IMR-90 (cell line): ENCODE measurements at regions of chr1 and their contacts with region 1.

Region 1: DNA sequence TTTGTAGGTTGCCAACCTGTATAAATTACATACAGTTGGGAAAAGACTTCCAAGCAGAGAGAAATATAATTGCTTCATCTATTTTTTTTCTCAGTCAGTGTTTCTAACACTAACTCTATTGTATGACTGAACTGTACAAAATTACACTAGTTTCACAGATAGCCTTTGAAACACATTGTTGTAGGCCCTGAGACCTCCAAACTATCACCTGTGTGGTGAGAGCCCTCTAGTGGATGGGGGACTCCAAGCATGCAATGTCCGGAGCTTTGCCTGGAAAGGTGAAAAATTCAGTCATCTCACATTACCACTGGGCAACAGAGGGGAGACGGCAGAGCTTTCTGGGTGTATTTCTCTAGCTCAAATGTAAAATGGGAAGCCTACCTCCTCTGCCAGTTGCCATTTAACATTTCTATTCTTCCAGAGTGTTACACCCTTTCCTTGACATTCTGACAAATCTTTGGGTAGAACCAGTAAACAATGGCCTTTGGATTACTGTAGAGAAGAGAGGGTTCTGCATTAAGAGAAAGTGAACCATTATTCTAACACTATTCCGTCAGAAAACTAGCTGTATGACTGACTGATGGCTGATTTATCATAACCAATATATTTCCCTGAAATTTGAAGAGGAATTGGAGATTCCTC is 212.2 kb downstream of the LYPLAL1 start:
- DNase-seq: peak; percentile 71
- ATAC-seq: peak; percentile 87
- H3K4me3 ChIP-seq: no peak overlapping the region
- H3K27ac ChIP-seq: no peak overlapping the region
- H3K4me1 ChIP-seq: peaks cover 2% of the 10 kb centered on the region; the same call in 1 of the 2 replicates
- H3K27me3 ChIP-seq: no peaks in the 10 kb centered on the region
- CTCF ChIP-seq: peak; percentile 83
- POLR2A ChIP-seq: no peak
- RAD21 ChIP-seq: peak; percentile 92

Region 2: DNA sequence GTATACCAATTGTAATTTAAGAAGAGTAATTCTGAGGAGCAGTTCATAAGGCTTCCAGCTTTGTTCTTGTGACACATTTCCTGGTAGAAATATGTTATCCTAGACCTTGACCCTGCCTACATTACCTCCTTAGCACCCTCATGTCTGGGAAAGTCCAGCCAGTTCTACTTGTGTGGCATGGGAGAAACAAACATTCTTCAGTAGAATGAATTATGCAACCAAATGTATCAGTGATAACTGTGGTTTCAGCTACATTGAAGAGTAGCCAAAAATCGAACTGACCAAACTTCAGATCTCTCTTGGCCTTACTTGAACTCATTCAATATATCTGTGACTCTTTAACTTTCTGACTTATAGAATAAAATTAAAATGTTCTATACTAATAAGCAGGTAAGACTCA is 520.3 kb before region 1 on chr1:
- CTCF ChIA-PET with region 1: no interaction called
- POLR2A ChIA-PET with region 1: no interaction called
- dilution Hi-C with region 1: no loop called
- in situ Hi-C with region 1: no loop called
- intact Hi-C with region 1: loop called (anchors 10 kb)
- DNase-seq: peak; percentile 47
- ATAC-seq: no peak; the same call in 1 of the 2 replicates
- H3K4me3 ChIP-seq: no peak overlapping the region
- H3K27ac ChIP-seq: no peak overlapping the region
- H3K4me1 ChIP-seq: no peaks in the 10 kb centered on the region; the same call in 1 of the 2 replicates
- H3K27me3 ChIP-seq: no peaks in the 10 kb centered on the region
- CTCF ChIP-seq: no peak
- POLR2A ChIP-seq: no peak
- RAD21 ChIP-seq: no peak

Region 3: GRCh38 chr1:218904416-218904815 is 481.5 kb before region 1 on chr1:
- CTCF ChIA-PET with region 1: no interaction called
- POLR2A ChIA-PET with region 1: no interaction called
- dilution Hi-C with region 1: no loop called
- in situ Hi-C with region 1: no loop called
- intact Hi-C with region 1: no loop called
- DNase-seq: no peak
- ATAC-seq: no peak
- H3K4me3 ChIP-seq: no peak overlapping the region
- H3K27ac ChIP-seq: no peak overlapping the region
- H3K4me1 ChIP-seq: no peaks in the 10 kb centered on the region
- H3K27me3 ChIP-seq: no peaks in the 10 kb centered on the region
- CTCF ChIP-seq: no peak
- POLR2A ChIP-seq: no peak
- RAD21 ChIP-seq: no peak

Region 4: DNA sequence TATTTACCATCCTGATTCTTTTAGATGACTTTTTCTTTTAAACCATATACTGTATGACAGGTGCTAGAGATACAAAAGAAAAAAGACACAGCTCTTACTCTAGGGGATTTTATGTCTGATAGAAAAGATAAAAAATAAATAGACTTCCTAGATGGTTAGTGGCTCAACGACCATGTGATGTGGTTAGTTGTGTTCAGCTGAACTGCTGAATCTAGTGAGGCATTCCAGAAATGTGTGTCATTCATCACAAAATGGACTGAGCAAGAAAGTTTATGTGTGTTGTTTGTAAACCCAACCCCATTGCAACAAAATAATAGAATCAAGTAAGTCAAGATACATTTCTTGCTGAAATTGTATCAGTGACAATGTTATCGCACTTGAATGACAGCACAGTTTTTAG is 418.1 kb before region 1 on chr1:
- CTCF ChIA-PET with region 1: no interaction called
- POLR2A ChIA-PET with region 1: no interaction called
- dilution Hi-C with region 1: no loop called
- in situ Hi-C with region 1: no loop called
- intact Hi-C with region 1: no loop called
- DNase-seq: peak; percentile 39
- ATAC-seq: no peak
- H3K4me3 ChIP-seq: no peak overlapping the region
- H3K27ac ChIP-seq: no peak overlapping the region
- H3K4me1 ChIP-seq: no peaks in the 10 kb centered on the region
- H3K27me3 ChIP-seq: no peaks in the 10 kb centered on the region
- CTCF ChIP-seq: no peak
- POLR2A ChIP-seq: no peak
- RAD21 ChIP-seq: no peak

Region 5: GRCh38 chr1:219088778-219089557 is 296.9 kb before region 1 on chr1:
- CTCF ChIA-PET with region 1: no interaction called
- POLR2A ChIA-PET with region 1: no interaction called
- dilution Hi-C with region 1: no loop called
- in situ Hi-C with region 1: no loop called
- intact Hi-C with region 1: loop called (anchors 5 kb)
- DNase-seq: peak; percentile 97
- ATAC-seq: peak; percentile 93
- H3K4me3 ChIP-seq: no peak overlapping the region
- H3K27ac ChIP-seq: no peak overlapping the region
- H3K4me1 ChIP-seq: peaks cover 6% of the 10 kb centered on the region
- H3K27me3 ChIP-seq: no peaks in the 10 kb centered on the region
- CTCF ChIP-seq: no peak
- POLR2A ChIP-seq: no peak
- RAD21 ChIP-seq: 0 out of 2 replicates have a peak, but pooled peaks have one; percentile 14